CD8-positive, alpha-beta memory T cell (primary cell): ENCODE measurements at regions of chr1 and their contacts with region 1.

Region 1: DNA sequence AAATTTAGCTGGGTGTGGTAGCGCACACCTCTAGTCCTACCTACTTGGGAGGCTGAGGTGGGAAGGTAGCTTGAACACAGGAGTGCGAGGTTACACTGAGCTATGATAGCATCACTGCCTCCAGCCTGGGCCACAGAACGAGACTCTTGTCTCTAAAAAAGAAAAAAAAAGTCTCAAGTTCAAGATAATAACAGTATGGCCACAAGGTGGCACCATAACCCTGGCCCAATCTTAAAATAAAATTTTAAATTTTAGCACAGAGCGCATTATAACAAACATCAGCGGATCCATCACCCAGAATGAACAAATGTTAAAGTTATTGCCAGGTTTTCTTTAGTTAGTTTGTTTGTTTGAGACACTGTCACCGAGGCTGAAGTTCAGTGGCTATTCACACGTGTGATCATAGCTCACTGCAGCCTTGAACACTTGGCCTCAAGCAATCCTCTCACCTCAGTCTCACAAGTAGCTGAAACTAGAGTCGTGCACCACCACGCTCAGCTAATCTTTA is 2.9 kb upstream of the HTR6 start:
- DNase-seq: peak in 4 of 5 donors; percentile 15 to 50 (median 28)
- H3K4me3 ChIP-seq: no peak overlapping the region
- H3K4me3 Mint-ChIP-seq: peak overlapping the region in 2 of 7 donors; percentile 38 to 46
- H3K27ac ChIP-seq: no peak overlapping the region
- H3K27ac Mint-ChIP-seq: no peak overlapping the region
- H3K4me1 ChIP-seq: peaks cover 9% of the 10 kb centered on the region
- H3K4me1 Mint-ChIP-seq: peaks cover 10 to 29% (median 24%) of the 10 kb centered on the region in 3 donors
- H3K27me3 ChIP-seq: peaks cover 5% of the 10 kb centered on the region
- H3K27me3 Mint-ChIP-seq: peaks cover 19 to 28% of the 10 kb centered on the region in 2 donors

Region 2: DNA sequence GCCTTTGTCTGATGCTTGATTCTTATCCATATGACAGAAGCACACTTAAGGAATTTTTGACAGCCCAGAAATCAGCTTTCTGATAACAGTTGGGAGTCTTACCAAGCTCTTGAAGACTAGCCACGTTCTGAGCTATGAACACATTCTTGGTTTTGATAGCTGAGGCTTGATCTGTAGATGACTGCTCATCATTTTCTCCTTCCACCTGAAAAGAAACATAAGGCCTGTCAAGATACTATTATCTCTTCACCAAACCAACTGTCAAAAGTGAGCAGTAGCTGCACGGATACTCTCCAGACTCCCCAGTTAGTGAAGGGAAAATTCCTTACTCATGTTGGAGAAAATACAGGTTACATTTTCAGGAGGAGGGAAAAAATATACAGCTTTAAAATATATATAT is 463.9 kb before region 1 on chr1:
- CTCF ChIA-PET with region 1: no interaction called
- POLR2A ChIA-PET with region 1: no interaction called
- DNase-seq: no peak
- H3K4me3 ChIP-seq: no peak overlapping the region
- H3K4me3 Mint-ChIP-seq: no peak overlapping the region
- H3K27ac ChIP-seq: no peak overlapping the region
- H3K27ac Mint-ChIP-seq: peak overlapping the region in 2 of 8 donors; percentile 6 to 40
- H3K4me1 ChIP-seq: peaks cover 8% of the 10 kb centered on the region
- H3K4me1 Mint-ChIP-seq: peaks cover 13 to 31% (median 15%) of the 10 kb centered on the region in 3 donors
- H3K27me3 ChIP-seq: no peaks in the 10 kb centered on the region
- H3K27me3 Mint-ChIP-seq: no peaks in the 10 kb centered on the region

Region 3: DNA sequence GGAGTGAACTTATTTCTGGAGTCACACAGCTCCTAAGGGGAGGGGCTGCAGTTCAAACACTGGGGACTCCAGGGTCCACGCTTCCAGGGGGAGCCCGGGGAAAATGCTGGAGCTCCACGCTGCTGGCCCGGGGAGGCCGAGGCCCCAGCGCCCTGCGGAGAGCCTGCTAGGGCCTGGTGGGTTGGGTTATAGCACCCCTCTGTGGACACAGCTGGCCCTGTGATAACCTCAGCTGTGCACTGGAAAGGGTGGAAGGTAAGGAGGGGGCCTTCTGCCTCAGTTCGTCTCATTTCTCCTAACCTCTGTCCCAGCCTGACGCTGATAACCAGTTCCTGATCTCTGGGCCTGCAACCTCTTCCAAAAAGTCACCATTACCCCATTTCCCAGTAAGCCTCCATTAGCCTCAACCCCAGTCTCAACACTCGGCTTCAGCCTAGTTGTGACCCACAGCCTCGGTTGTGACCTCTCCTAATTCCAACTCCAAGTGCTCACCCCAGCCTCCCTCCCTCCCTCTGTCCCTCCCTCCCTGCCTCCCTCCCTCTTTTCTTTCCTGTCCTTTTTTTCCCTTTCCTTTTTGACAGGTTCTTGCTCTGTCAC is 10.5 kb before region 1 on chr1:
- CTCF ChIA-PET with region 1: interaction called, 40 read pairs
- POLR2A ChIA-PET with region 1: no interaction called
- DNase-seq: peak in 3 of 5 donors; percentile 28 to 62 (median 45)
- H3K4me3 ChIP-seq: no peak overlapping the region
- H3K4me3 Mint-ChIP-seq: no peak overlapping the region
- H3K27ac ChIP-seq: no peak overlapping the region
- H3K27ac Mint-ChIP-seq: peak overlapping the region in 1 of 8 donors; percentile 8
- H3K4me1 ChIP-seq: peaks cover 12% of the 10 kb centered on the region
- H3K4me1 Mint-ChIP-seq: peaks cover 12 to 35% (median 18%) of the 10 kb centered on the region in 3 donors
- H3K27me3 ChIP-seq: no peaks in the 10 kb centered on the region
- H3K27me3 Mint-ChIP-seq: peaks cover 0 to 4% of the 10 kb centered on the region in 2 donors

Region 4: DNA sequence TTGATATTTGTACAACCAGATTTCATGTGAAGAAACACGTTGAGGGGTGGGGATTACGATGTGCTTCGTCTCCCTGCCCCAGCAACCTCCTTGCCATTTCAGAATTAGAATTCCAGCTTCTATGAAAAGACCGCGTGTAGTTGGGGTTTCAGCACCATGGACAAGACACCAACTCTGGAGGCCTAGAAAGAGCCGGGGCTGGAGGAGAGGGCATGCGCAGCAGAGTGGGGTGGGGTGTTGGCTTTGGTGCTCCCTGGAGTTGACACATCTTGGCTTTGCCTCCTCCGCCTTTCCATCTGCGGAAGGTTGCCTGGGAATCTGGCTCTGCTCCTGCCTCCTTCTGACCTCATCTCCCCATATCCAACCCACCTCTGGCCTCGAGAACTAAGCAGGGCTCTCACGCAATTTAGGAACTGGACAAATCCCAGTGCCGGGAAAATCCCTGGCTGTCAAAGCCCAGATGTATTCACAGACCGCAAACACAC is 14.7 kb after region 1 on chr1:
- CTCF ChIA-PET with region 1: interaction called, 17 read pairs
- POLR2A ChIA-PET with region 1: no interaction called
- DNase-seq: no peak
- H3K4me3 ChIP-seq: no peak overlapping the region
- H3K4me3 Mint-ChIP-seq: no peak overlapping the region
- H3K27ac ChIP-seq: no peak overlapping the region
- H3K27ac Mint-ChIP-seq: peak overlapping the region in 2 of 8 donors; percentile 69 to 88
- H3K4me1 ChIP-seq: no peaks in the 10 kb centered on the region
- H3K4me1 Mint-ChIP-seq: peaks cover 0 to 8% (median 0%) of the 10 kb centered on the region in 3 donors
- H3K27me3 ChIP-seq: no peaks in the 10 kb centered on the region
- H3K27me3 Mint-ChIP-seq: peaks cover 13 to 19% of the 10 kb centered on the region in 2 donors

Region 5: GRCh38 chr1:19793360-19794046 is 131.7 kb after region 1 on chr1:
- CTCF ChIA-PET with region 1: no interaction called
- POLR2A ChIA-PET with region 1: no interaction called
- DNase-seq: no peak
- H3K4me3 ChIP-seq: no peak overlapping the region
- H3K4me3 Mint-ChIP-seq: peak overlapping the region in 2 of 7 donors; percentile 20 to 29
- H3K27ac ChIP-seq: no peak overlapping the region
- H3K27ac Mint-ChIP-seq: peak overlapping the region in 5 of 8 donors; percentile 10 to 66 (median 54)
- H3K4me1 ChIP-seq: no peaks in the 10 kb centered on the region
- H3K4me1 Mint-ChIP-seq: peaks cover 31 to 46% (median 43%) of the 10 kb centered on the region in 3 donors
- H3K27me3 ChIP-seq: no peaks in the 10 kb centered on the region
- H3K27me3 Mint-ChIP-seq: no peaks in the 10 kb centered on the region